ENCODE measurements at regions of chr6 and their contacts with region 1.

Region 1: GRCh38 chr6:37257634-37258404 is at the starts of genes TBC1D22B and TMEM217:
- DNase-seq: peak; percentile 96
- H3K4me3 Mint-ChIP-seq: peak within 1 kb of the TSS; percentile 96
- H3K27ac Mint-ChIP-seq: peak within 1 kb of the TSS; percentile 96
- H3K4me1 Mint-ChIP-seq: peaks cover 28% of the 10 kb centered on the region
- H3K27me3 Mint-ChIP-seq: no peaks in the 10 kb centered on the region
- CTCF ChIP-seq: no peak
- total RNA-seq, gene TBC1D22B: 12.9 and 14.6 TPM in 2 replicates
- total RNA-seq, gene TMEM217: 3.2 and 4.6 TPM in 2 replicates

Region 2: DNA sequence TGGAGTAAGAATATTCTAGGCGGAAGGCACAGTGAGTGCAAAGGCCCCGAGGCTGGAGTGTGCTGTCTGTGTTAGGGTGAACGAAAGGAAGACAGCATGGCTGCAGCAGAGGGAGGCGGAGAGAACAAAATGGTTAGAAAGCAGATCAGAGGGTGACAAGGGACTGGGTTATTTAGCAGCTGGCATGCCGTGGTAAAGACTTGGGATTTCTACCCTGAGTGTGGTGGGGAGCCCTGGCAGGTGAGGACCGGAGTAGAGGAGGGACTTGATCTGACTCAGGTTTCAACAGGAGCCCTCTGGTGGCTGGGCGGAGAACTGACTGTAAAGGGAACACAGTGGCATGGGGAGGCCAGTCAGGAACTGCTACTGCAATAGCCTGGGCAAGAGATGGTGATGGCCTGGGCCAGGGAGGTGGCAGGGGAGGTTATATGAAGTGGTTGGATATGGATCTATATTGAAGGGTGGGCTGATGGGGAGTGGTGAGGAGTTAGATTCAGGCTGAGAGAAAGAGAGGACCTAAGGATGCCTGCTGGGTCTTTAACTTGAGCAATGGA is 49.8 kb before region 1 on chr6:
- CTCF ChIA-PET with region 1: interaction called, 3 read pairs
- POLR2A ChIA-PET with region 1: interaction called, 4 read pairs
- intact Hi-C with region 1: loop called (anchors 1 kb)
- DNase-seq: peak; percentile 87
- H3K4me3 Mint-ChIP-seq: no peak overlapping the region
- H3K27ac Mint-ChIP-seq: no peak overlapping the region
- H3K4me1 Mint-ChIP-seq: peaks cover 7% of the 10 kb centered on the region
- H3K27me3 Mint-ChIP-seq: no peaks in the 10 kb centered on the region
- CTCF ChIP-seq: peak; percentile 60

Region 3: DNA sequence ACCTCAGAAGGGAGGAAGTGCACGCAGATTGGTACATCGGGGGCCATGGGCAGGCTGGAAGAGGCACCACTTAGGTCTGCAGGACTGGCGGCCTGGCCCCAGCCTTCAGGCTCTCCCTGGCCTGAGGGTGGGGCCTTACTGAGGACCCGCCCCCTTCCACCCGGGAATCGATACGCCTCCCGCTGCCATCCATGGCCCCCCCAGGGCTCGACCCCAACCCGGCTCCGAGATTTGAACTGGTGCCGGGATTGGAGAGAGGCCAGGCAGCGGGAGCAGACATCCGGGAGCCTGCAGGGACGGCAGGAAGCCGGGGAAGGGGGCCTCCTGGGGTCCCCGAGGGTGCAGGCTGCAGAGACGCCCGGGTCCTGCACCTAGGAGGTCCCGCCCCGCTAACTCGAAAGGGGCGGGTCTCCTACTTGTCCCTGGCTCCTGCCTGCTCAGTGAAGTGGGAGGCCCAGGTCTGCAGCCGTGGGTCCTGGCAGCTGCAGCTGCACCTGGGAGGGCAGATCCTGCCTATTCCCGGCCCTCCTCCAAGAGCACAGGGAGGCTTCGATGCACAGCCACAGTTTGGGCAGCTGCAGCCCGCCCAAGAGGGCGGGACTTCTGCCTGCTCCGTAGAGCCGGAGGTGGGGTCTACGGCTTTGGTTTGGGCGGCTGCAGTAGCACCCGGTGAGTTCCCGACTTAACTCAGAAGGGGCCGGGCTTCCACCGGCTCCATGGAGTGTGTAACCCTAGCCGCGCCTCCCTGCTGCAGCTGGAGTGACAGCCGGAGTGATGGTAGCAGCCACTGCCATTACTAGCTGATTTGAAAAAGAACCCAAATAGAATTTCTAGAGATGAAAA is 35.5 kb before region 1 on chr6:
- CTCF ChIA-PET with region 1: no interaction called
- POLR2A ChIA-PET with region 1: interaction called, 10 read pairs
- intact Hi-C with region 1: no loop called
- DNase-seq: peak; percentile 92
- H3K4me3 Mint-ChIP-seq: peak overlapping the region; percentile 64
- H3K27ac Mint-ChIP-seq: no peak overlapping the region
- H3K4me1 Mint-ChIP-seq: peaks cover 7% of the 10 kb centered on the region
- H3K27me3 Mint-ChIP-seq: no peaks in the 10 kb centered on the region
- CTCF ChIP-seq: no peak

Region 4: GRCh38 chr6:37239950-37240713 is 17.7 kb before region 1 on chr6:
- CTCF ChIA-PET with region 1: interaction called, 6 read pairs
- POLR2A ChIA-PET with region 1: interaction called, 110 read pairs
- intact Hi-C with region 1: loop called (anchors 1 kb)
- DNase-seq: peak; percentile 95
- H3K4me3 Mint-ChIP-seq: no peak overlapping the region
- H3K27ac Mint-ChIP-seq: peak overlapping the region; percentile 89
- H3K4me1 Mint-ChIP-seq: peaks cover 47% of the 10 kb centered on the region
- H3K27me3 Mint-ChIP-seq: no peaks in the 10 kb centered on the region
- CTCF ChIP-seq: no peak

Region 5: GRCh38 chr6:37279366-37280134 is 21.7 kb after region 1 on chr6:
- CTCF ChIA-PET with region 1: interaction called, 5 read pairs
- POLR2A ChIA-PET with region 1: interaction called, 21 read pairs
- intact Hi-C with region 1: no loop called
- DNase-seq: peak; percentile 78
- H3K4me3 Mint-ChIP-seq: no peak overlapping the region
- H3K27ac Mint-ChIP-seq: peak overlapping the region; percentile 24
- H3K4me1 Mint-ChIP-seq: peaks cover 6% of the 10 kb centered on the region
- H3K27me3 Mint-ChIP-seq: no peaks in the 10 kb centered on the region
- CTCF ChIP-seq: no peak

Region 6: GRCh38 chr6:37602346-37602745 is 344.5 kb after region 1 on chr6:
- CTCF ChIA-PET with region 1: no interaction called
- POLR2A ChIA-PET with region 1: no interaction called
- intact Hi-C with region 1: no loop called
- DNase-seq: no peak
- H3K4me3 Mint-ChIP-seq: no peak overlapping the region
- H3K27ac Mint-ChIP-seq: no peak overlapping the region
- H3K4me1 Mint-ChIP-seq: no peaks in the 10 kb centered on the region
- H3K27me3 Mint-ChIP-seq: peaks cover 50% of the 10 kb centered on the region
- CTCF ChIP-seq: no peak